CD4-positive, alpha-beta memory T cell (primary cell): ENCODE measurements at regions of chr4 and their contacts with region 1.

Region 1: DNA sequence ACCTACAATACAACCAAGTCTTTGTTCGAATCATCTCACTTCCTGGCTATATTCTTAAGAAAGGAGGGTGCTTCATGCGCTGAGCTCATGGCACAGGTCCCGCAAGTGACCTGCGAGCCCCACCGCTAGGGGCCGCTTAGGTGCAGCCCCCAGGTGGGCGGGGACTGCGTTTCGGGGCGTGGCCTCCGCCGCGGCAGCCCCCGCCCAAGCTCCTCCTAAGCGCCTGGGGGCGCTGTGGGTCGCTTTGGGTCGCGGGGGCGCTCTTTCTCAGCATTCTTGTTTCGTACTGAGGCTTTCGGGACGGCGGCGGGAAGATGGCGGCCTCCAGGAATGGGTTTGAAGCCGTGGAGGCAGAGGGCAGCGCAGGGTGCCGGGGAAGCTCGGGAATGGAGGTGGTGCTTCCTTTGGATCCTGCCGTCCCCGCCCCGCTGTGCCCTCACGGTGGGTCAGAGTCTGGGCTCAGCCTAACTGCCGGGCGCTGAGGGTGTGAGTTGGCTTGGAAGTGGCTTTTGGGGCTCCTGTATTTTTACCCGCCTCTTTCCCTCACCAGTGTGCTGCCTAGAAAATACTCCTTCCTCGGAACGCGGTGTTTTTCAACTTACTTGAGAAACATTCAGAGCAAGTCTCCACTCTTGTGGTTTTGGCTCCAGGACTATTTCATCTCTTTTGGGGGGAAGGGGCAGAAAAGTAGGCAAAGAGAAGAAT is at the start of gene ZCCHC4:
- DNase-seq: peak; percentile 87 to 96 (median 91)
- H3K4me3 ChIP-seq: peak within 1 kb of the TSS; percentile 85 to 86
- H3K4me3 Mint-ChIP-seq: peak within 1 kb of the TSS; percentile 97 to 100 (median 98)
- H3K27ac ChIP-seq: peak within 1 kb of the TSS; percentile 64
- H3K27ac Mint-ChIP-seq: peak within 1 kb of the TSS; percentile 89 to 99 (median 97)
- H3K4me1 ChIP-seq: peaks cover 17% of the 10 kb centered on the region
- H3K4me1 Mint-ChIP-seq: peaks cover 8 to 26% (median 15%) of the 10 kb centered on the region in 4 donors
- H3K27me3 ChIP-seq: no peaks in the 10 kb centered on the region
- H3K27me3 Mint-ChIP-seq: peaks cover 7 to 9% of the 10 kb centered on the region in 2 donors
- total RNA-seq, gene ZCCHC4: 13.0 to 14.4 TPM

Region 2: GRCh38 chr4:25180524-25181131 is 132.0 kb before region 1 on chr4:
- CTCF ChIA-PET with region 1: interaction called, 6 read pairs
- POLR2A ChIA-PET with region 1: no interaction called
- intact Hi-C with region 1: loop called (anchors 1 kb)
- DNase-seq: peak in 4 of 5 donors; percentile 23 to 39 (median 34)
- H3K4me3 ChIP-seq: no peak overlapping the region
- H3K4me3 Mint-ChIP-seq: no peak overlapping the region
- H3K27ac ChIP-seq: no peak overlapping the region
- H3K27ac Mint-ChIP-seq: peak overlapping the region in 3 of 7 donors; percentile 29 to 57 (median 43)
- H3K4me1 ChIP-seq: peaks cover 24% of the 10 kb centered on the region
- H3K4me1 Mint-ChIP-seq: peaks cover 22 to 29% (median 27%) of the 10 kb centered on the region in 4 donors
- H3K27me3 ChIP-seq: no peaks in the 10 kb centered on the region
- H3K27me3 Mint-ChIP-seq: no peaks in the 10 kb centered on the region

Region 3: GRCh38 chr4:25330905-25331808 is 18.5 kb after region 1 on chr4:
- CTCF ChIA-PET with region 1: interaction called, 24 read pairs
- POLR2A ChIA-PET with region 1: interaction called, 15 read pairs
- intact Hi-C with region 1: no loop called
- DNase-seq: peak in 3 of 5 donors; percentile 6 to 20 (median 16)
- H3K4me3 ChIP-seq: peak overlapping the region; percentile 8 to 49
- H3K4me3 Mint-ChIP-seq: peak overlapping the region; percentile 88 to 95 (median 90)
- H3K27ac ChIP-seq: peak overlapping the region; percentile 37
- H3K27ac Mint-ChIP-seq: peak overlapping the region; percentile 78 to 99 (median 97)
- H3K4me1 ChIP-seq: peaks cover 15% of the 10 kb centered on the region
- H3K4me1 Mint-ChIP-seq: peaks cover 10 to 19% (median 17%) of the 10 kb centered on the region in 4 donors
- H3K27me3 ChIP-seq: no peaks in the 10 kb centered on the region
- H3K27me3 Mint-ChIP-seq: no peaks in the 10 kb centered on the region

Region 4: GRCh38 chr4:25367004-25367621 is 54.5 kb after region 1 on chr4:
- CTCF ChIA-PET with region 1: interaction called, 38 read pairs
- POLR2A ChIA-PET with region 1: interaction called, 3 read pairs
- intact Hi-C with region 1: loop called (anchors 2 kb)
- DNase-seq: peak in 4 of 5 donors; percentile 21 to 35 (median 29)
- H3K4me3 ChIP-seq: no peak overlapping the region
- H3K4me3 Mint-ChIP-seq: no peak overlapping the region
- H3K27ac ChIP-seq: no peak overlapping the region
- H3K27ac Mint-ChIP-seq: peak overlapping the region in 1 of 7 donors; percentile 53
- H3K4me1 ChIP-seq: no peaks in the 10 kb centered on the region
- H3K4me1 Mint-ChIP-seq: peaks cover 0 to 1% (median 0%) of the 10 kb centered on the region in 4 donors
- H3K27me3 ChIP-seq: no peaks in the 10 kb centered on the region
- H3K27me3 Mint-ChIP-seq: no peaks in the 10 kb centered on the region

Region 5: DNA sequence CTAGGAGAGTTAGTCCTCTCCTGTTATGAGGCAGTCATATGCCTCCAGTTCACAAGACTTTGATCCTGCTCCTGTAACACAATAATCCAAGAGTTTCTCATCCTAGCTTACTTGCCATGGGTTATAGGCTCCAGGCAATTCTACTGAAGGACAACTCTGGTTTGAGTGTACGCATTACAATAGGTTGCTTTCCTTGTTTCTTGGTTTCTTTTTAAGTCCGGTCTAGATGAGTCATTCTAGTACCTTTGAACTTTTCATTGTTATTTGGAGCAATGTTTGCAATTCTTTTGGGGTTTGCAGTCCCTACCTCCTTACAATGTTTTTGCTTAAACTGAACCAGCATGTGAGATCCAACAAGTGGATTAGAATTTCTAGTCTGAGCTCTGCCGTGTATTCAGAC is 173.5 kb after region 1 on chr4:
- CTCF ChIA-PET with region 1: no interaction called
- POLR2A ChIA-PET with region 1: no interaction called
- intact Hi-C with region 1: no loop called
- DNase-seq: no peak
- H3K4me3 ChIP-seq: no peak overlapping the region
- H3K4me3 Mint-ChIP-seq: no peak overlapping the region
- H3K27ac ChIP-seq: no peak overlapping the region
- H3K27ac Mint-ChIP-seq: no peak overlapping the region
- H3K4me1 ChIP-seq: no peaks in the 10 kb centered on the region
- H3K4me1 Mint-ChIP-seq: no peaks in the 10 kb centered on the region
- H3K27me3 ChIP-seq: no peaks in the 10 kb centered on the region
- H3K27me3 Mint-ChIP-seq: peaks cover 0 to 1% of the 10 kb centered on the region in 2 donors

Region 6: GRCh38 chr4:25913851-25914669 is 601.4 kb after region 1 on chr4 and contains the start of gene SMIM20:
- CTCF ChIA-PET with region 1: no interaction called
- POLR2A ChIA-PET with region 1: interaction called, 3 read pairs
- intact Hi-C with region 1: loop called (anchors 5 kb)
- DNase-seq: peak; percentile 90 to 93 (median 93)
- H3K4me3 ChIP-seq: peak within 1 kb of the TSS; percentile 44 to 78
- H3K4me3 Mint-ChIP-seq: peak within 1 kb of the TSS; percentile 92 to 98 (median 96)
- H3K27ac ChIP-seq: peak within 1 kb of the TSS; percentile 82
- H3K27ac Mint-ChIP-seq: peak within 1 kb of the TSS; percentile 97 to 99 (median 98)
- H3K4me1 ChIP-seq: peaks cover 18% of the 10 kb centered on the region
- H3K4me1 Mint-ChIP-seq: peaks cover 12 to 30% (median 20%) of the 10 kb centered on the region in 4 donors
- H3K27me3 ChIP-seq: no peaks in the 10 kb centered on the region
- H3K27me3 Mint-ChIP-seq: no peaks in the 10 kb centered on the region
- total RNA-seq, gene SMIM20: 16.9 to 19.2 TPM